ENCODE measurements at regions of chr6 and their contacts with region 1.

Region 1: GRCh38 chr6:158220786-158221442 is 52.8 kb downstream of the GTF2H5 start:
- DNase-seq: peak; percentile 76 to 90 (median 83)
- ATAC-seq: peak; percentile 91 to 97 (median 96)
- H3K4me3 ChIP-seq: no peak overlapping the region
- H3K27ac ChIP-seq: no peak overlapping the region
- H3K4me1 ChIP-seq: peaks cover 0 to 7% (median 0%) of the 10 kb centered on the region in 12 donors
- H3K27me3 ChIP-seq: no peaks in the 10 kb centered on the region
- CTCF ChIP-seq: peak; percentile 91 to 98 (median 97)
- POLR2A ChIP-seq: no peak

Region 2: GRCh38 chr6:157813757-157814455 is 407.0 kb before region 1 on chr6:
- intact Hi-C with region 1: no loop called
- DNase-seq: peak in 1 of 5 donors; percentile 27
- ATAC-seq: peak; percentile 48 to 88 (median 78)
- H3K4me3 ChIP-seq: no peak overlapping the region
- H3K27ac ChIP-seq: peak overlapping the region; percentile 14 to 91 (median 62)
- H3K4me1 ChIP-seq: peaks cover 0 to 30% (median 13%) of the 10 kb centered on the region in 12 donors
- H3K27me3 ChIP-seq: no peaks in the 10 kb centered on the region
- CTCF ChIP-seq: no peak
- POLR2A ChIP-seq: no peak

Region 3: DNA sequence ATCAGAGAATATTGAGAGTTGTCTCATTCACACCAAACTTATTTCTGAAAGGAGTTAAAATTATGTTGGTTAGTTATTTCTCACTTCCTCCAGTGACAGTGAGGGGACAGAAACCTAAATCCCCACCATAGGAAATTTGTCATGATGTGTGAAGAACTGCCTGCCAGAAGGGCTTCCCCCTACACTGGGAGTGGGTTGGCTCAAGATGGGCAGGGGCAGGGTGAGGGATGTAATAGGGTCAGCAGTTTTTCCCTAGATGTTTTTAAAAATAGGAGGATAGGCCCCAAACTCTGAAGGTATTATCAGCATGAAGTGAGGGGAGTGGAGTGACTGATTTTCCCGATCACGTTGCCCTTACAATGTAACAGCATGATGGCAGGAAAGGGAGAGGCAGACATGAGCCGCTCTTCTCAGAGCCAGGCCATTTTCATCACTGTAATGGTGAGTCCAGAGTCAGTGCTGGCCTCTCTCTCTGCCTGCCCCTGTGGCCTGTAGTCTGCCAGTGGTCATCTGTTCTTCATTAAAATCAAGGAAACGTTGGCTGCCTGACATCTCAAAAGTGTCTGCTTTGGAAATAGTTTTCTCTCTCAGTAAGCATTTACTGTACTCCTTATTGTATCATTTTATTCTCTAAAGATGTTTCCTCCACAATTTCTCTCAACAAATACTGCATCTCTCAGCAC is 299.1 kb before region 1 on chr6:
- intact Hi-C with region 1: no loop called
- DNase-seq: peak in 3 of 5 donors; percentile 37 to 43 (median 38)
- ATAC-seq: peak in 3 of 4 donors; percentile 81 to 90 (median 89)
- H3K4me3 ChIP-seq: no peak overlapping the region
- H3K27ac ChIP-seq: peak overlapping the region in 4 of 12 donors; percentile 2 to 44 (median 22)
- H3K4me1 ChIP-seq: peaks cover 0 to 13% (median 2%) of the 10 kb centered on the region in 12 donors
- H3K27me3 ChIP-seq: no peaks in the 10 kb centered on the region
- CTCF ChIP-seq: no peak
- POLR2A ChIP-seq: no peak

Region 4: GRCh38 chr6:158131926-158132325 is 89.0 kb before region 1 on chr6:
- intact Hi-C with region 1: no loop called
- DNase-seq: no peak
- ATAC-seq: no peak
- H3K4me3 ChIP-seq: no peak overlapping the region
- H3K27ac ChIP-seq: no peak overlapping the region
- H3K4me1 ChIP-seq: no peaks in the 10 kb centered on the region
- H3K27me3 ChIP-seq: no peaks in the 10 kb centered on the region
- CTCF ChIP-seq: peak in 5 of 12 donors; percentile 16 to 28 (median 23)
- POLR2A ChIP-seq: no peak

Region 5: DNA sequence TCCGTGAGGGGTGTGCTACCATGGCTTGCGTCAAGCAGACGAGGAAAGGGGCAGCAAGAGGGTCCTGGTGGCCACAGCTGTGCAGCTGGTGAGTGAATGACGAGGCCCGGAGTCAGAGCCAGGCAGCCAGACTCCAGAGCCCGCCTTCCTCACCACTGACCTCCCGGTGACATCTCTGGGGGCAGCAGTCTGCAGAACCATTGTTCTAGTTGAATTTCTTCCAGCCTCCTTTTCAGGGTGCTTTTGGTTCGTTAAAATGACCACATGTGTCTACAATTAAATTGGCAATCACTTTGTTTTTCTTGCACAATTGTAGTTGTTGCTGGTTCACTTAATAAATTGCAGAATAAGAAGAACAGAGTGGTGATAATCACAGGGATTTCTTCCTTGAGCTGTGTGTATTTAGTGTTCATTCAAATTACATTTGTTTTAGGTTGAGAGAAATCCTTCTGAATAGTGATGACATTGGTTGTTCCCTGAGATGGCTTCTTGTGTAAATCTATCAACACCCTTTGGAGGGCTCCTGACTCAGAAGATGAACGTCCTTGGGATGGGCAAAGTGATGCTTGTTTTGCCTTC is 187.7 kb after region 1 on chr6:
- intact Hi-C with region 1: loop called in 1 of 10 experiments (anchors 10 kb)
- DNase-seq: peak; percentile 69 to 85 (median 82)
- ATAC-seq: peak; percentile 45 to 93 (median 90)
- H3K4me3 ChIP-seq: no peak overlapping the region
- H3K27ac ChIP-seq: peak overlapping the region in 10 of 12 donors; percentile 10 to 71 (median 52)
- H3K4me1 ChIP-seq: peaks cover 0 to 40% (median 27%) of the 10 kb centered on the region in 12 donors
- H3K27me3 ChIP-seq: no peaks in the 10 kb centered on the region
- CTCF ChIP-seq: no peak
- POLR2A ChIP-seq: no peak

Region 6: DNA sequence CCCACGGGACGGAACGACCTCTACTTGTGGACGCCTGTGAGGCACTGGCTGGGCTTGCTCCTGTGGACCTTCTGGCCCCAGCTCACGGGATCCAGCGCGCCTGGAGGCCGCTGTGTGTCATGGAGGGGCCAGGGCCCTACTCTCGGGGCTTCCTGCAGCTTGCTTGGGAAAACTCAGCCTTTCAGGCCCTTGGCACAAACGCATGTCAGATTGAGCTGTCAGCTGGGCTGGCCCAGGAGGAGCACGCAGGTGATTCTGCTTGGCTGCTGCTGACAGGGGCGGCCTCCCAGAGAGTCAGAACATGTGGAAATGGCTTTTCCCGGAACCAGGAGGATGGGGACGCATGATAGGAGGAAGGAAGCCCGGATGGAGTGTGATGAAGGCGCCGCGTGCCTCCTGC is 378.7 kb after region 1 on chr6:
- intact Hi-C with region 1: loop called in 5 of 10 experiments (anchors 2 to 10 kb)
- DNase-seq: no peak
- ATAC-seq: no peak
- H3K4me3 ChIP-seq: no peak overlapping the region
- H3K27ac ChIP-seq: no peak overlapping the region
- H3K4me1 ChIP-seq: no peaks in the 10 kb centered on the region
- H3K27me3 ChIP-seq: no peaks in the 10 kb centered on the region
- CTCF ChIP-seq: no peak
- POLR2A ChIP-seq: no peak

Region 7: GRCh38 chr6:158686791-158687381 is 466.0 kb after region 1 on chr6:
- intact Hi-C with region 1: loop called in 8 of 10 experiments (anchors 5 to 10 kb)
- DNase-seq: no peak
- ATAC-seq: peak in 2 of 4 donors; percentile 45 to 47
- H3K4me3 ChIP-seq: no peak overlapping the region
- H3K27ac ChIP-seq: peak overlapping the region in 2 of 12 donors; percentile 41 to 75
- H3K4me1 ChIP-seq: peaks cover 0 to 24% (median 0%) of the 10 kb centered on the region in 12 donors
- H3K27me3 ChIP-seq: no peaks in the 10 kb centered on the region
- CTCF ChIP-seq: no peak
- POLR2A ChIP-seq: no peak

Region 8: GRCh38 chr6:158972241-158973233 is 751.6 kb after region 1 on chr6:
- intact Hi-C with region 1: loop called in 1 of 10 experiments (anchors 10 kb)
- DNase-seq: no peak
- ATAC-seq: peak in 1 of 4 donors; percentile 60
- H3K4me3 ChIP-seq: no peak overlapping the region
- H3K27ac ChIP-seq: no peak overlapping the region
- H3K4me1 ChIP-seq: peaks cover 0 to 5% (median 0%) of the 10 kb centered on the region in 12 donors
- H3K27me3 ChIP-seq: no peaks in the 10 kb centered on the region
- CTCF ChIP-seq: peak; percentile 34 to 73 (median 57)
- POLR2A ChIP-seq: no peak

Measured in heart left ventricle (tissue), 16 donors.